Aorta (tissue), 5 donors: ENCODE measurements at regions of chr16 and their contacts with region 1.

Region 1: GRCh38 chr16:24353622-24354021 is 97.5 kb downstream of the CACNG3 start:
- DNase-seq: no peak
- ATAC-seq: no peak
- H3K4me3 ChIP-seq: no peak overlapping the region
- H3K27ac ChIP-seq: no peak overlapping the region
- H3K4me1 ChIP-seq: no peaks in the 10 kb centered on the region
- H3K27me3 ChIP-seq: peaks cover 0 to 2% of the 10 kb centered on the region in 2 donors

Region 2: GRCh38 chr16:24291932-24292331 is 61.7 kb before region 1 on chr16:
- intact Hi-C with region 1: loop called in 1 of 2 experiments (anchors 10 kb)
- DNase-seq: no peak
- ATAC-seq: no peak
- H3K4me3 ChIP-seq: no peak overlapping the region
- H3K27ac ChIP-seq: no peak overlapping the region
- H3K4me1 ChIP-seq: no peaks in the 10 kb centered on the region
- H3K27me3 ChIP-seq: no peaks in the 10 kb centered on the region

Region 3: GRCh38 chr16:24418666-24419065 is 65.0 kb after region 1 on chr16:
- intact Hi-C with region 1: loop called in 1 of 2 experiments (anchors 10 kb)
- DNase-seq: no peak
- ATAC-seq: no peak
- H3K4me3 ChIP-seq: no peak overlapping the region
- H3K27ac ChIP-seq: no peak overlapping the region
- H3K4me1 ChIP-seq: no peaks in the 10 kb centered on the region
- H3K27me3 ChIP-seq: peaks cover 0 to 1% of the 10 kb centered on the region in 2 donors